ENCODE measurements at regions of chr2 and their contacts with region 1.

Region 1: GRCh38 chr2:151071906-151072305 is 189.8 kb downstream of the RBM43 start:
- DNase-seq: no peak
- ATAC-seq: no peak
- H3K4me3 ChIP-seq: no peak overlapping the region
- H3K27ac ChIP-seq: no peak overlapping the region
- H3K4me1 ChIP-seq: no peaks in the 10 kb centered on the region
- H3K27me3 ChIP-seq: no peaks in the 10 kb centered on the region
- CTCF ChIP-seq: no peak
- POLR2A ChIP-seq: no peak

Region 2: GRCh38 chr2:151027151-151027550 is 44.8 kb before region 1 on chr2:
- intact Hi-C with region 1: loop called in 1 of 10 experiments (anchors 2 kb)
- DNase-seq: no peak
- ATAC-seq: peak in 2 of 4 donors; percentile 45 to 54
- H3K4me3 ChIP-seq: no peak overlapping the region
- H3K27ac ChIP-seq: no peak overlapping the region
- H3K4me1 ChIP-seq: no peaks in the 10 kb centered on the region
- H3K27me3 ChIP-seq: no peaks in the 10 kb centered on the region
- CTCF ChIP-seq: no peak
- POLR2A ChIP-seq: no peak

Region 3: DNA sequence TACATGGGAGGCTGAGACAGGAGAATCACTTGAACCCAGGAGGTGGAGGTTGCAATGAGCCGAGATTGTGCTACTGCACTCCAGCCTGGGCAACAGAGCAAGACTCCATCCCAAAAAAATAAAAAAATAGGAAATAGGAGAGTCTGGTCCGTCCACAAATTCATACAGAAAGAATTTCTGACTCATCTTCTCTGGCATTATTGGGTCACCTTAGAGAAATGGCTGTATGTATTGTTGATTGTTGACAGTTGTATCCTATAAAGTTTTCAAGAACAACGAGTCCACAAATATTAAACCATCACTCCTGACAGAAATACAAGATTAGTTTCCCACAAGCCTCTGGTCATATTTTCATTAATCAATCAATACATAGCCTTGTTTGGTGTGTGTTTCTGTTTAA is 169.3 kb after region 1 on chr2:
- intact Hi-C with region 1: no loop called
- DNase-seq: no peak
- ATAC-seq: no peak
- H3K4me3 ChIP-seq: no peak overlapping the region
- H3K27ac ChIP-seq: no peak overlapping the region
- H3K4me1 ChIP-seq: peaks cover 0 to 5% (median 0%) of the 10 kb centered on the region in 12 donors
- H3K27me3 ChIP-seq: no peaks in the 10 kb centered on the region
- CTCF ChIP-seq: no peak
- POLR2A ChIP-seq: no peak